ENCODE measurements at regions of chr1 and their contacts with region 1.

Region 1: DNA sequence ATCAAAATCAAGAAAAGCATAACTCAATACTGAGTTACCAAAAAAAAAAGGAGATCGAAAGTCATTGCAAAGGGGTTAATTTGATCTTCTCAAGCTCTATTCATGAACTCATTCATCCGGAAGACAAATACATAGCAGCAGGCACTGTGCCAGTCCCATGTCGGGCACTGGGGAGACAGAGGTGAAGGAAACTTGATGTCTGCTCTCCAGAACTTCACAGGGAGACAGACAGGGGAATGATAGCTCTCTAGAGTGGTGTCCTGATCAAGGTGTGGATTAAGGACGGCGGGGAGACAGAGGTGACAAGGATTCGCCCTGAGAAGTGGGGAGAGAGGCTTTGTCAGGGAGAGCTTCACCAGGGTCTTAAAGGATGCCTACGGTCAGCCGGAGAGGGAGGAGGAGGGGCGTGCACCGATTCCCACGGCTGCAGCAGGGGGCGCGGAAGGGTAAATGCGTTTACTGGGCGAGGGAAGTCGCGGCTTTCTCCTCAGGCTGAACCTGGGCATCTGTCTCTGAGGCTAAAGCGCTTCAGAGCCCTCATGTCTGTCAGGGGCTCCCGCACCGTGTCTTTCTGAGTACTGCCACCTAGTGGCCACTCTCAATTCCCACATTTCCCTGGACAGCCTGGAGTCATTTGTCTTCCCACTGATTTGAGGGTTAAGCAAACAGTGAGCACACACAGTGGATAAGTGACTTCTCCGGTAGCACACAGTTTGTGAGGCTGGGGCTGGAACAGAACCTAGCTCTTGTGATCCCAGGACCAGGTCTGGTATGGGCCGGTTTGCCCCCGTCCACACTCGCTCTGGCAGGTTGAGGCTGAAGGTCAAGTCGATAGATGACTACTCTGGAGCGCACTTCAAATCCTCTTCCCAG is 152.8 kb downstream of the TENT5C start:
- DNase-seq: no peak
- H3K4me3 ChIP-seq: peak overlapping the region; percentile 60
- CTCF ChIP-seq: peak; percentile 69

Region 2: DNA sequence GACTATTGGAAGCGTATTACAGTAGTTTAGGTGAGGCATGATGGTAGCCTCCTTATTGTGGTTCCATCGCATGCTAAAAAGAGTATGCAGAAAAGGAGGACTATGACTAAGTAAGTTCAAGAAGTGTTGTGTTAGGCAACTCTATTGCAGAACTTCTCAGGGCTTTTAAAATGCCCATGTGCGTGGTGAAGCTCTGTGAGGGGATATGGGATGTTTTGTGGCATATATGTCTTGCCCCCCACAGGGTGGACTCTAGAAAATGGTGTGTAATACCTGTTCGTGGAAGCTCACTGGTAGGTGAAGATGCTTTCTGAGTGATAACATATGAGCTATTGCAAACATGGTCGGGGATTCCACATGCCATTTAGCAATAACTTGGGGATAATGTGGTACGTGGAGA is 359.7 kb before region 1 on chr1:
- CTCF ChIA-PET with region 1: no interaction called
- POLR2A ChIA-PET with region 1: no interaction called
- DNase-seq: no peak
- H3K4me3 ChIP-seq: no peak overlapping the region
- CTCF ChIP-seq: no peak

Region 3: DNA sequence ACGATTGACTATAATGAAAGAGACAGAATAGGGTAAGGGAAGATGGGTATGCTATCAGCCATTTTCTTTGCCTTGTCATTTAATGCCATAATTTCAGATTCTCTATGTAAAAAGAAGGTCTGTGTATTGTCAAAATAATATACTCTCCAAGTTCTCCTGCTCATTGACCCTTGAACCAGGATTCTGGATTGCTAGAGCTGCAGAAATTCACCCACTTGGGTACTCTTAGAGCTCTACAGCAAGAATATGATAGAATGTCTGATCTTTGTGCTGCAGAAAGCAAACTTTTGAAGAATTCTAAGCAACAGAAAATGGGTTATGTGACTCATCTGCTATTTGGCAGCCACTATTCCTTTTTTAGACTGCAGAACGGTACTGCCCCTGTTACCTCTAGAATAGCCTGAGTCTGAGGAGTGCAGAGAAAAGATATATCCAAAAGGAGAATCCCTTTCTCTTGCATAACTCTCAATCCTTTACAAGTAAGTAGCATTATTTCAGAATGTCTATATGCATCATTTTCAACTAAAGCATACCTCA is 231.0 kb before region 1 on chr1:
- CTCF ChIA-PET with region 1: interaction called, 209 read pairs
- POLR2A ChIA-PET with region 1: no interaction called
- DNase-seq: no peak
- H3K4me3 ChIP-seq: no peak overlapping the region
- CTCF ChIP-seq: no peak

Region 4: DNA sequence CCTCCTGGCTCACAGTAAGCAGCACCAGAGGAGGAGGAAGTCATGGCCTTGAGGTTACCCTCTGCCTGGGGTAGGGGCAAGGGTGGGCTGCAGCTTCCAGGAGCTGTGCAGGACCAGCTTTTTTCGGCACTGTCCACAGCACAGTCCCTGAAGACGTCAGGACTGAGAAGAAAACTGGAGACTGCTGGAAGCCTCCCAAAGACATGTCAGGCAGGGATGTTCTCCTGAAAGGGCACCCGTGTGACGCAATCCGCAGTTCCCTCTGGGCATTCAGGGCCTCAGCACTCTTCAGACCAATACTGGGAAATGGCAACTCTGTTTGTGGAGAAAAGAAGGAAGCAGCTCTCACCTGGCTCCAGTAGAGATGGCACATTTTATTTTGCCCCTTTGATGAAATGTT is 217.7 kb before region 1 on chr1:
- CTCF ChIA-PET with region 1: interaction called, 209 read pairs
- POLR2A ChIA-PET with region 1: no interaction called
- DNase-seq: no peak
- H3K4me3 ChIP-seq: no peak overlapping the region
- CTCF ChIP-seq: no peak

Region 5: DNA sequence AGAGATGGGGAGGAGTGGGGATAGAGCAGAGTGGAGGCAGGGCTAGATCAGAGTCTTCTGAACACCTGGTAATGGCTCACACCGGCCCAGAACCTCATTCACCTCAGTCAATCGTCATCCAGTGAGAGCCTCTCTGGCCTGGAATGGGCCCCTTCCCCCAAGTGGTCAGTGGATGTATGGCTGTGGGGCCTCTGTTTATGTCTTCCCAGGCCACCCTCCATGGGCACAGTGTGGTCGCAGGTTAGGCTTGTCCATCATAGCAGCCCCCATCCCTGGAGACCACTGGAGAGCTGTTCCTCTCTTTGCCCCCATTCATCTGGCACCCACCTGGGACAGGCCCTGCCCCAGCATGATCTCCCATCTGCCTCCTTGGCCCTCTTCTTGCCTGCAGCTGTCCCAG is 182.4 kb before region 1 on chr1:
- CTCF ChIA-PET with region 1: no interaction called
- POLR2A ChIA-PET with region 1: no interaction called
- DNase-seq: no peak
- H3K4me3 ChIP-seq: no peak overlapping the region
- CTCF ChIP-seq: no peak

Region 6: DNA sequence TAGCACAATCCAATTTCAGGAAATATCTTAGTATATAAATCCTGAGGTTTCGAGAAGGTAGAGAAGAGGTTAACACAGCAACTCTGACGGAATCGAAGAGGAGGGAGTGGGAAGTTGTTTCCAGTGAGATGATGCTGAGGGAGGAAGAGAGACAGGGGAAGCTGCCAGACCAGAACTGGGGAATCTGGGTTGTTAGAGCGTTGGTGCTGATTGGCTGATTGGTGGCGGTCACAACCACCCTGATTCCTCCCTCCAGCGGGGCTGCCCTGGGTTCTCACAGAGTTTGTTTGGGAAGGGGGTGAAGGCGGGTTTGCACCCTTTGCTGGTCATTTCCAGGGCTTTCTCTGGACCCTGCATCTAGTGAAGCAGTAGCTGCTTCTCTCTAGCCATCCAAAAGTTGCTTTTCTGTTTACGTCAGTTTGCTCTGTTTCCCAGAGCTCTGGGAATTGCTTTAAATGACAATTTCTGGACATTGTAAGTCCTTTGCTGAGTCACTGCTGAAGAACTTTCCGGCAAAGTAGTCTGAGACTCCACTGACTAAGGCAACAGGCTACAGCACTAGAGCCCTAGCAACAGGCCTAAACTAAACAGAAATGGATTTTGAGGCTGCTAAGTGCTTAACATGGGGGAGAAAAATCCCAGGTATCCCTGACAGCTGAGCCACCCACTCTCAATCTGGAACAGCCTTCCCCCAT is 62.7 kb before region 1 on chr1:
- CTCF ChIA-PET with region 1: interaction called, 15 read pairs
- POLR2A ChIA-PET with region 1: no interaction called
- DNase-seq: peak; percentile 82
- H3K4me3 ChIP-seq: no peak overlapping the region; the same call in 1 of the 2 replicates
- CTCF ChIP-seq: no peak

Region 7: GRCh38 chr1:117735045-117735992 is 23.4 kb before region 1 on chr1:
- CTCF ChIA-PET with region 1: interaction called, 70 read pairs
- POLR2A ChIA-PET with region 1: no interaction called
- DNase-seq: no peak
- H3K4me3 ChIP-seq: peak overlapping the region; percentile 13
- CTCF ChIP-seq: no peak

Region 8: DNA sequence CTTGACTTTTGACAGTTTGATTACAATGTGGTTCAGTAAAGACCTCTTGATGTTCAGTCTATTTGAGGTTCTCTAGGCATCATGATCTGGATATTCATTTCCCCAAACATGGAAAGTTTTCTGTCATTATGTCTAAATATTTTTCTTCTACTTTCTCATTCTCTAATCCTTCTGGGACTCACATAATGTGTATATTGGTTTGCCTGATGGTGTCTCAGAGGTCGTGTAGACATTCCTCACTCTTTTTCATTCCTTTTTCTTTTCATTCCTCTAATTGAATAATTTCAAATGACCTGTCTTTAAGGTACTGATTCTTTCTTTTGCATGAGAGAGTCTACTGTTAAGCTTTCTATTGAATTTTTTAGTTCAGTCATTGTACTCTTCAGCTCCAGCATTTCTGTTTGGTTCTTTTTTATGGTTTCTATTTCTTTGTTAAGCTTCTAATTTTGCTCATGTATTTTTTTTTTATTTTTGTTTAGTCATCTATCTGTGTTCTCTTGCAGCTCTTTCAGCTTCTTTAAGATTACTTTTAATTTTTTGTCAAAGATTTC is 12.4 kb after region 1 on chr1:
- CTCF ChIA-PET with region 1: interaction called, 25 read pairs
- POLR2A ChIA-PET with region 1: no interaction called
- DNase-seq: no peak
- H3K4me3 ChIP-seq: no peak overlapping the region
- CTCF ChIP-seq: no peak

Region 9: DNA sequence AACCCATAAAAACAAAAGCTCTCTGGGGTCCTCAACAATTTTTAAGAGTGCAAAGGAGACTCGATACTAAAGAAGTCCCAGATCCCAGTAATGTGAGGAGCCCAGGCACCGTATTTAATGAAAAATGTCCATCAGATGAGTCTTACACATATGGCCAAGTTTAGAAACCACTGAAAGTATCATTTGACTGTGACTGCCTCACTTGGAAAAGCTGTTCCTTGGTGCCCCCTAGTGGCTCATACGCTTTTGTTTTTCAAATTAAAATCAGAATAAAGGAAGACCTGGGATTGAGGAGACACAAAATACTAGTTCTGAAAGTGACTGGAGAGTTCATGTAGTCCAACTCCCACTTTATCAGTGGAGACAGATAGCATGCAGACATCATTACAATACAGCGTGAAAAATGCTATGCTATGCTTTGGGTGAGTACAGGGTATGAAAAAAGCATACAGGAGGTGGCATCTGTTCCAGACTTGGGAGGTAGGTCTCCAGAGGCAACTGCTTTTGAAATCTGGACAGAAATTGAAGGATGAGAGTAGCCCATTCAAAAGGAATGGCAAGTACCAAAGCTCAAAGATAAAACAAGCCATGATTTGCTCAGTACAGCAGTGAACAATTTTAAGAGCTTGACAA is 136.9 kb after region 1 on chr1:
- CTCF ChIA-PET with region 1: interaction called, 161 read pairs
- POLR2A ChIA-PET with region 1: no interaction called
- DNase-seq: peak; percentile 71
- H3K4me3 ChIP-seq: no peak overlapping the region
- CTCF ChIP-seq: peak; percentile 64

Region 10: DNA sequence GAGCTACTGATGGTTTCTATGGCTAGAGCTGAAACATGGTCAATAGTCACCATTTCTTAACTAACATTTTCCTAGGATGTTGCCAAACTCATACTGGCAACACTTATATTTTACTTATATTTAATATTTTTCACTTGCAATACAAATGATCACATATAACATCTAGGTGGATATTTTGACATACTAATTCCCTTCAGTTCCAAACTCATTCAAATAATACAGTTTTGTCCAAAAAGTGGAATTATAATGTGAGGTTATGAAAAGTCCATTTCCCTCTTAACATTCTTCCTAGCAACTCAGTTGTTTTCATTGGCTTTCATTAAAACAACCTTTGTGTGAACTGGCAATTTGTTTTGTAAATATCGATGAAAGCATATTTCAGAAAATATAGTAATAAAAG is 410.3 kb after region 1 on chr1:
- CTCF ChIA-PET with region 1: no interaction called
- POLR2A ChIA-PET with region 1: no interaction called
- DNase-seq: no peak
- H3K4me3 ChIP-seq: no peak overlapping the region
- CTCF ChIP-seq: no peak